Activated B cell treated with CpG ODN at 0.5 μM for 24 hours (primary cell): ENCODE measurements at regions of chr4 and their contacts with region 1.

Region 1: DNA sequence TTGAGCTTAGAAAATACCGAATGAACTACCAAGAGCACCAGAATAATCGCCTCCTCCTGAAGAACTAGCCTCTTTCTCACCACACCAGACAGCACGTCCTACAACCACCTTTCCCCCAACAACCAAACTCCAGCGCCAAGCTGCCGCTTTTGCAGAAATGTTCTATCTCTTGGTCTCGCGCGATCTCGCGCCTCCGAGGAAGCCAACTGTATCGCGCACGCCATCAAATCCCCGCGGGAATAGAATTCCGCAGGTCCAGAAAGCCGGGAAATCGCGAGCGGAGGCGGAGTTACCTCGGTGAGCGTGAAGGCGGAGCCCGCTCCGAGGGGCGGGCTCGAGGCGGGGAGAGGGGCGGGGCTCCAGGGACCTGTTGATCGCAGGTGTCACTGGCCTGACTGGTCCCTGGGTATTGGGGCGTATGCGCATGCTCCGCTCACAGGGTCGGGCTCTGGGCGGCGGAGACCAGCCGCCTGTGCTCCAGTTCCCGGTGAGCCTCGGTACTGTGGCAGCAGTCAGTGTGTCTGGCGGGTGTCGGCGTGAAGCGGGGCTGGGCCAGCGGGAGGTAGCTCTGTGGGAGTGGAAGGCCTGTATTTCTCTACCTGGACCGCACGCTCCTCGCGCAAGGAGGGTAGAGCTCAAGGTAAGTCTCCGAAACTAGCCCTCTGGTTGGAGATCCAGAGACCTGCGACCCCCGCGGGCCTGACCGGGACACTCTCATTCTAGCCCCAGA is at the start of gene USP53:
- DNase-seq: peak; percentile 95
- ATAC-seq: peak; percentile 92
- H3K4me3 Mint-ChIP-seq: peak within 1 kb of the TSS; percentile 90
- H3K27ac Mint-ChIP-seq: peak within 1 kb of the TSS; percentile 94
- H3K4me1 Mint-ChIP-seq: peaks cover 56% of the 10 kb centered on the region
- H3K27me3 Mint-ChIP-seq: no peaks in the 10 kb centered on the region
- CTCF ChIP-seq: no peak
- total RNA-seq, gene USP53: 20.4 TPM in 2 replicates

Region 2: GRCh38 chr4:118586357-118586790 is 626.0 kb before region 1 on chr4:
- CTCF ChIA-PET with region 1: no interaction called
- POLR2A ChIA-PET with region 1: no interaction called
- intact Hi-C with region 1: loop called (anchors 5 kb)
- DNase-seq: no peak
- ATAC-seq: no peak
- H3K4me3 Mint-ChIP-seq: no peak overlapping the region
- H3K27ac Mint-ChIP-seq: no peak overlapping the region
- H3K4me1 Mint-ChIP-seq: peaks cover 11% of the 10 kb centered on the region
- H3K27me3 Mint-ChIP-seq: peaks cover 20% of the 10 kb centered on the region
- CTCF ChIP-seq: no peak

Region 3: DNA sequence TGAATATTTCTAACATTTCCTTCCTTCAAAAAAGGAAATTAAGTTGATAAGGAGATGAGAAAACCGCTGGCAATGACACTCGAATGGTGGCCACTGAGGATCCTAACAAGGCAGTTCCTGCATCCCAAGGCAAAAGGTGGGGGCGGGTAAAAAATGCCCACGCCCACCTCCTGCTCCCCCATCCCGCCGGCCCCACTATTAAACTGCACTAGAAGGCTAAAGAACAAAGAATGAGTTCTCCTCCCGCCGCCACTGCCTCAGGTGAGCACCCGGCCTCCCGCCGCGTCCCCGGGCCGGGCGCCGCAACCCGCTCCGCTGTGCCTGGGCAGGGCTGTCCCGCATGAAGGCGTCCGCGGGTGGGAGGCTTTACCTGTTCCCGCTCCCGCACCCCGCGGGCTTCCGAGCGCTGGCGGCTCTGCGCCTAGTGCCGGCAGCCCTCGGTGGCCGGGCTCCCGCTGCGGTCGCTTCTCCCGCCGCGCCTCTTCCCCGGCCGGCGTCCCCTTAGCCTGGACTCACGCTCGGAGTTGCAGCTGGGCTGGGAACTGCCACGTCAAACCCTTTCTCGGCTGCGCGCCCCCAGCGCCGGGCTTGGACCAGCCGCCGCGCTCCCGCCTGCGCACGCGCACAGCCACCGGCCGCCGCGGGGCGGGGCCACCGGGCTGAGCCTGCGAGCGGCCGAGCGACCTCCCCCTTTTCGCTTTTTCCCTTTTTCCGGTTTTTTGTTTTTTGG is 376.7 kb before region 1 on chr4 and contains the start of gene SEC24D:
- CTCF ChIA-PET with region 1: no interaction called
- POLR2A ChIA-PET with region 1: interaction called, 4 read pairs
- intact Hi-C with region 1: loop called (anchors 2 kb)
- DNase-seq: peak; percentile 90
- ATAC-seq: peak; percentile 88
- H3K4me3 Mint-ChIP-seq: peak within 1 kb of the TSS; percentile 100
- H3K27ac Mint-ChIP-seq: peak within 1 kb of the TSS; percentile 96
- H3K4me1 Mint-ChIP-seq: peaks cover 17% of the 10 kb centered on the region
- H3K27me3 Mint-ChIP-seq: no peaks in the 10 kb centered on the region
- CTCF ChIP-seq: no peak
- total RNA-seq, gene SEC24D: 19.4 and 22.6 TPM in 2 replicates

Region 4: GRCh38 chr4:119138046-119138445 is 74.4 kb before region 1 on chr4:
- CTCF ChIA-PET with region 1: no interaction called
- POLR2A ChIA-PET with region 1: interaction called, 16 read pairs
- intact Hi-C with region 1: no loop called
- DNase-seq: no peak
- ATAC-seq: no peak
- H3K4me3 Mint-ChIP-seq: no peak overlapping the region
- H3K27ac Mint-ChIP-seq: no peak overlapping the region
- H3K4me1 Mint-ChIP-seq: peaks cover 25% of the 10 kb centered on the region
- H3K27me3 Mint-ChIP-seq: no peaks in the 10 kb centered on the region
- CTCF ChIP-seq: no peak

Region 5: DNA sequence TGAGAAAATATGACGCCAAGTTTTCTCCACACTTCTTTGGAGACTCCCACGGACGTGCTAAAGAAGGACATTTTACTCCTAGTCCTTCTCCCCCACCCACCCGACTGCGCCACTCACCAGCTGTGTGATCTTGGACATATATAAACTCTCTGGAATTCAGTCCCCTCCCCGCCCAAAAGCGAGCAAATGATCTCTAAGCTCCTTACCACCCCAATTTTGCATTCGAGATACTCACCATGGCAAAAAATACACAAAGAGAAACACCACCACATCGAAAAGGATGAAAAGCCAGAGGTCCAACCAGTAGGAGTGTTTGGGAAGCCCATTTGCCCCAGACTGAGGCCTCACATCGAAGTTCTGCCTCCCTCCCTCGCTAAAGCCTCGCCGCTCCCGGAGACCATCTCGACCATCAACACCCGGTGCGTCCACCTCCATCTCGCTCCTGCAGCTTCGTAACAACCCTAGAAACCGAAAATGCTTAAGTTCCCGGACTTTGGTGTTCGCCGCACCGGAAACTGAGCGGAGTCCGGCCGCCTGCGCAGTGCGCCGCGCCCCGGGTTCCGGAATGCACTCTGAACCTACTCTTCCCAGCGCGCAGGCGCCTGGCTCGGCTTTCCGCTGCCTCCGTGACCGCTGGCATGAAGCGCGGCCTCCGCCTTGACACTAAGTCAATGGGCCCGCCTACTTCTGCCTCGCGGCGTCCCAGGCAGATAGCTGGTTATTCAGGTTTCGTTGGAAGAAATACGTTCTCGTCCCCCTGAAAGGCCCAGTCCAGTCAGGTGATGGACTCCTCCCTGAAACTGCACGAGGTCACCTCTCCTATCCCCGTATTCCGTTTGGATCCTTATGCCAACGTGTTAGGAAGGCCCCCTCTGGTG is 87.9 kb after region 1 on chr4:
- CTCF ChIA-PET with region 1: interaction called, 3 read pairs
- POLR2A ChIA-PET with region 1: interaction called, 44 read pairs
- intact Hi-C with region 1: loop called (anchors 1 kb)
- DNase-seq: peak; percentile 88
- ATAC-seq: peak; percentile 95
- H3K4me3 Mint-ChIP-seq: peak overlapping the region; percentile 99
- H3K27ac Mint-ChIP-seq: peak overlapping the region; percentile 97
- H3K4me1 Mint-ChIP-seq: peaks cover 37% of the 10 kb centered on the region
- H3K27me3 Mint-ChIP-seq: no peaks in the 10 kb centered on the region
- CTCF ChIP-seq: no peak